ENCODE measurements at regions of chr7 and their contacts with region 1.

Region 1: GRCh38 chr7:127900732-127901685 is 130.2 kb downstream of the LRRC4 start:
- DNase-seq: no peak
- H3K4me3 ChIP-seq: no peak overlapping the region
- H3K27ac ChIP-seq: no peak overlapping the region
- H3K4me1 ChIP-seq: peaks cover 44% of the 10 kb centered on the region
- H3K27me3 ChIP-seq: no peaks in the 10 kb centered on the region
- CTCF ChIP-seq: no peak

Region 2: GRCh38 chr7:127437852-127438251 is 463.2 kb before region 1 on chr7:
- CTCF ChIA-PET with region 1: no interaction called
- POLR2A ChIA-PET with region 1: no interaction called
- intact Hi-C with region 1: no loop called
- DNase-seq: peak; percentile 50
- H3K4me3 ChIP-seq: no peak overlapping the region
- H3K27ac ChIP-seq: no peak overlapping the region
- H3K4me1 ChIP-seq: no peaks in the 10 kb centered on the region
- H3K27me3 ChIP-seq: no peaks in the 10 kb centered on the region
- CTCF ChIP-seq: no peak

Region 3: DNA sequence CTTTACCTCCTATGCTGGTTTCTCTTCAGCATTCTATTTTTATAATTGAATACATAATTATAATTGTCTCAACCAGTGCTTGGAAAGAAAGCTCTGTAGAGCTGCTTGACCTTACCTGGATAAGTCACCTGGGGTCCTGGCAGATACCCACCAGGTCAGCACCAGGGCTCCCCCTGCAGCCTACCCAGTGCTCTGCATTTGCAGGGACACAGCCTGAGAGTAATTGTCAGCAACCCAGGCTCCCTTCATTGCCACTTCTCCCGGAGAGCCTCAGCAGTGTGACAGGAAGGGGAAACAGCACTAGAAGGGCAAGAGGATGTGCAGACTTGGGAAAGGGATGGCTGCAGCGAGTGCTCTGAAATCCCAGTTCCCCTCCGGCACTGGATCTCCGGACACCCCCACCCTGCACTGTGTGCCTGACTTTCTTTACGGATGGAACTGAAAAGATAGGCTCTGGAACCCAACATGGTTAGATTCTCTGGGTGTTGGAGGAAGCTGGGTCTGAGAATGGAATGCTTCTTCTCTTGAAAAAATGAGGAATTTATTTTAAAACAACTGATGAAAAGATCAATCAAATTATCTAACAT is 271.6 kb before region 1 on chr7:
- CTCF ChIA-PET with region 1: no interaction called
- POLR2A ChIA-PET with region 1: no interaction called
- intact Hi-C with region 1: no loop called
- DNase-seq: no peak
- H3K4me3 ChIP-seq: no peak overlapping the region
- H3K27ac ChIP-seq: no peak overlapping the region
- H3K4me1 ChIP-seq: no peaks in the 10 kb centered on the region
- H3K27me3 ChIP-seq: peaks cover 10% of the 10 kb centered on the region
- CTCF ChIP-seq: peak; percentile 68

Region 4: DNA sequence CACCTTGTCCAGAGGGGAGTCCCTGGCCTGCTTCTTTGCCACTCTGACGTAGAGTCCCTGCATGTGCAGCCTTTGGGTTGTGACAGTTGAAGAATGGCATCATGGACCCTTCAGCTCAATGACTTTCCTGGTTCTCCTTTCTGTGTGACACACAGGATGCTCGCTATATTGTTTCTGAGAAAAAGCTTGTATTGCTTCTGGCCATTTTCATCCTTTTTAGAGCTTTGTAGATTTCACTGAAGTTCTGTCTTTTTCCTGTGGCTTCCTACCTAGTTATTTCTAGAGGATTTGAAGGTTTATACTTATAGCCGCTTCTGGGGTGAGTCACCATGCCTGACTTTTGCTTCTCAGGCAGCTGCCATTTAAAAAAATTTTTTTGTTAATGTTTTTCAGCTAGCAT is 222.1 kb before region 1 on chr7:
- CTCF ChIA-PET with region 1: no interaction called
- POLR2A ChIA-PET with region 1: no interaction called
- intact Hi-C with region 1: no loop called
- DNase-seq: no peak
- H3K4me3 ChIP-seq: no peak overlapping the region
- H3K27ac ChIP-seq: no peak overlapping the region
- H3K4me1 ChIP-seq: peaks cover 1% of the 10 kb centered on the region
- H3K27me3 ChIP-seq: no peaks in the 10 kb centered on the region
- CTCF ChIP-seq: no peak

Region 5: DNA sequence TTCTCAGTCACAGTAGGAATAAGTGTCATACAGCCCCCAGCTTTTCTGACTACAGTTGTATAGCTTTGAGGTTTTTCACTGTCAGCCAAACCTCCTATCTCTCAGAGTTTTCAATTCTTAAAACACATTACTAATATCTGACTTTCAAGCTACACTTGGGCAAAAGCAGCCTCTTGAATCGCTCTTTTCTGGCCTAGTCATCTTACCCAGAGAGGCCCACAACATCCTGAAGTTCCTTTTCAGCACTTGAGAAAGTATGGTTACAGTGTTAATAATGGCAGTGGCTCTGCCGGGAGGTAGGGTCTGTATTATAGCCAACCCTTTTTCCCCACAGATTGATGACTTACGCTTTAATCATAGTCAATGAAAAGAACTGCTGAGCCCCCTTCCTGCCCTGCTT is 50.8 kb before region 1 on chr7:
- CTCF ChIA-PET with region 1: no interaction called
- POLR2A ChIA-PET with region 1: no interaction called
- intact Hi-C with region 1: loop called (anchors 5 kb)
- DNase-seq: no peak
- H3K4me3 ChIP-seq: no peak overlapping the region
- H3K27ac ChIP-seq: no peak overlapping the region
- H3K4me1 ChIP-seq: peaks cover 10% of the 10 kb centered on the region
- H3K27me3 ChIP-seq: no peaks in the 10 kb centered on the region
- CTCF ChIP-seq: no peak